ENCODE measurements at regions of chr6 and their contacts with region 1.

Region 1: GRCh38 chr6:33391278-33391921 is at the start of gene KIFC1:
- DNase-seq: peak; percentile 100
- total RNA-seq, gene KIFC1: 0.24 TPM

Region 2: GRCh38 chr6:33335916-33336315 is 55.5 kb before region 1 on chr6:
- intact Hi-C with region 1: no loop called
- DNase-seq: no peak

Region 3: DNA sequence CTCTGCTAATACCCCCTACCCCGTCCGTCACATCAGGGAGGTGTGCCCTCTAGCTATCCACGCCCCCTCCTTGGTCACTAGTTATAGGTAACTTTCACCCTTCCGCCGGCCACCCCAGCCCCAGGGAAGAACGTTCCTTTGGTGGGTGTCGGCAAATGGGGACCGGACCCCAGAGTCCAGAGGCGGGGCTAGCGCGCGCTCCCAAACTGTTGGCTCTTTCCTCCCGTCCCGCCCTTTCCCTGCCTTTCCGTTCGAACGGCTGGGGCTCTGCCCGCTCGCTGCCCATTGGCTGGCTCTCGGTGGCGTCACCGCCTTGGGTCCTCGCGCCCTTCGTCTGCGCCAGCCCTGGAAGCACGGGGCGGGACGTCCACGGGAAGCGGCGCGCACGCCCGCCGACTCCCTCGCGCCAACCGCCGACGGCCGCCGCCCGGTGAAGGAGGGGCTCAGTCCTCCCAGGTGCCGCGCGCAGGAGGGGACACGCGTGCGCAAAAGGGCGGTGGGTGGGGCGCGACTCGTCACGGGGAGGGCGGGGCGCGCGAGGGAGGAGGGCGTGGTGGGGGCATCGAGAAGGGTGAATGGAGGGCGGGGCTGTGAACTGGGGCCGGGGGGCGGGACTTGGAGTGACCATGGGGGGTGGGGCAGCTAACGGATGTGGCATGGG is 18.8 kb after region 1 on chr6:
- intact Hi-C with region 1: loop called (anchors 1 kb)
- DNase-seq: peak; percentile 99

Region 4: DNA sequence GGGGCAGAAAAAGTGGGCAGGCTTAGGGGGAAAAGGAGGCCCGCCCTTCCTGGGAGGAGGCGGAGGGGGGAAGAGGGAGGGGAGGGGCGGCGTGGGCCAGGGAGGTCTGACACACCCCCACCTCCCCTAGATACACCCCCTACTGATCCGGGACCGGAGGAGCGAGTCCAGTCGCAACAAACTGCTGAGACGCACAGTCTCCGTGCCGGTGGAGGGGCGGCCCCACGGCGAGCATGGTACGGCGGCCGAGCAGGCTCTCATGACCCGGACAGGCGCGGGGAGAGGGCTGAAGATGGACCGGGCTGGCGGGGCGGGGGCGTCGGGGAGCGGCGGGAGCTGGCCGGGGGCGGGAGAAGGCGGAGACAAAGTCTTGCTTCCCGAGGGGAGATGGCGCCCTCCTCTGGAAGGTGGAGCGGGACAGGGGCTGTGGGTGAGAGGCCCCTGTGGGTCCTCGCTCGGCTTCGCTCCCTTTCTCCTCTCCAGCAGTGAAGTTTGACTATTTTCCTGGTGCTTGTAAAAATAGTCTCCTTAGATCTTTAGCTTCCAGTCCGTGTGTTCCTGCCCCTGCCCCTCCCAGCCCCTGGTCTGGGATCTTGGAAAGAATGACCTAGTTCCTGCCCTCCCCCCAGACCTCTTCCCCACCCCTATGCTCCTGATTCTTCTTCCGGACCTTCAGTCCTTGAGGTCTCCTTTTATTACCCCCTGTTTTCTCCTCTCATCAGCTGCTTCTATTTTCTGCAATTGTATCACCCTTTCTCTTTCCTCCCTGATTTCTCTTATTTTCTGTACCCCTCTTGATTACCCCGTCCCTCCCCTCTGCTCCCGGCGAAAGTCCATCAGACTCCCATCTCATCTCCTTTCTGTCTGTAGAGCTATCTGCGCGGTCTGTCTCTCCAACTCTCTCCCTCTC is 34.5 kb after region 1 on chr6:
- intact Hi-C with region 1: loop called (anchors 1 kb)
- DNase-seq: peak; percentile 94

Region 5: GRCh38 chr6:33570806-33571636 is 179.6 kb after region 1 on chr6:
- intact Hi-C with region 1: loop called (anchors 2 kb)
- DNase-seq: peak; percentile 94

Region 6: GRCh38 chr6:34630040-34630439 is 1238.6 kb after region 1 on chr6:
- intact Hi-C with region 1: no loop called
- DNase-seq: no peak